PC-9 (cell line): ENCODE measurements at regions of chr20 and their contacts with region 1.

Region 1: GRCh38 chr20:18252597-18253451 is 35.5 kb upstream of the ZNF133 start:
- DNase-seq: peak; percentile 95 to 100
- H3K4me3 ChIP-seq: peak overlapping the region; percentile 34; the same call in 1 of the 2 replicates
- H3K27ac ChIP-seq: peak overlapping the region; percentile 96
- H3K4me1 ChIP-seq: peaks cover 40% of the 10 kb centered on the region
- H3K27me3 ChIP-seq: no peaks in the 10 kb centered on the region
- CTCF ChIP-seq: no peak

Region 2: GRCh38 chr20:18144541-18145099 is 108.2 kb before region 1 on chr20:
- CTCF ChIA-PET with region 1: interaction called, 3 read pairs
- POLR2A ChIA-PET with region 1: interaction called, 3 read pairs
- intact Hi-C with region 1: loop called (anchors 1 kb)
- DNase-seq: peak; percentile 64 to 94
- H3K4me3 ChIP-seq: peak overlapping the region; percentile 55; the same call in 1 of the 2 replicates
- H3K27ac ChIP-seq: peak overlapping the region; percentile 93
- H3K4me1 ChIP-seq: peaks cover 62% of the 10 kb centered on the region
- H3K27me3 ChIP-seq: no peaks in the 10 kb centered on the region
- CTCF ChIP-seq: no peak

Region 3: DNA sequence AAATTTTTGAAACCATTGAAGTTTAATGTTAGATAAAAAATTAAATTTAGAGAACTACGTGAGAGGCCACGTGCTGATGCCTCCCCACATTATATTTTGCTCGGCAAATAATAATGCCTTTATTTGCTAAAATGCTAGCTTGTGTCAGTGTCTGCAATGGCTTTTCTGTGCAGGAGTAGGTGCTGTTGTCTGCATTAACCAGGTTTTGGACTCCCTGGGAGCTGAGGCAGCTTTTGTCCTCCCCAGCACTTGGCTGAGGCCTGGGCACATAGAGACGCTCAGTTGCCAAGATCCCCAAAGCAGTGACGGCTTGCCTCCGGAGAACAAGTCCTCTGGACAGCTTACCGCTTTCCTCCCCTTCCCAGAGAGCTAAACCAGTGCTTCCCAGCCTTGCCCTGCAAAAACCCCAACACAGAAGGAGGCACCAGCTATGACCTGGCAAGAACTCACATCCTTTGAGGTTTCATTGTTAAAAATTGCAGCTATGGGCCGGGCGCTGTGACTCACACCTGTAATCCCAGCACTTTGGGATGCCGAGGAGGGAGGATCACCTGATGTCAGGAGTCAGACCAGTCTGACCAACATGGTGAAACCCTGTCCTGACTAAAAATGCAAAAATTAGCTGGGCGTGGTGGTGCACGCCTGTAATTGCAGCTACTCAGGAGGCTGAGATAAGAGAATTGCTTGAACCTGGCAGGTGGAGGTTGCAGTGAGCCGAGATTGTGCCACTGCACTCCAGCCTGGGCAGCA is 55.3 kb before region 1 on chr20:
- CTCF ChIA-PET with region 1: interaction called, 3 read pairs
- POLR2A ChIA-PET with region 1: interaction called, 7 read pairs
- intact Hi-C with region 1: loop called (anchors 1 kb)
- DNase-seq: peak; percentile 91 to 96
- H3K4me3 ChIP-seq: peak overlapping the region; percentile 26; the same call in 1 of the 2 replicates
- H3K27ac ChIP-seq: peak overlapping the region; percentile 86
- H3K4me1 ChIP-seq: peaks cover 22% of the 10 kb centered on the region
- H3K27me3 ChIP-seq: no peaks in the 10 kb centered on the region
- CTCF ChIP-seq: peak; percentile 43

Region 4: GRCh38 chr20:18224968-18225568 is 27.8 kb before region 1 on chr20:
- CTCF ChIA-PET with region 1: interaction called, 17 read pairs
- POLR2A ChIA-PET with region 1: no interaction called
- intact Hi-C with region 1: loop called (anchors 1 kb)
- DNase-seq: peak; percentile 68 to 77
- H3K4me3 ChIP-seq: peak overlapping the region; percentile 33; the same call in 1 of the 2 replicates
- H3K27ac ChIP-seq: peak overlapping the region; percentile 49
- H3K4me1 ChIP-seq: peaks cover 37% of the 10 kb centered on the region
- H3K27me3 ChIP-seq: no peaks in the 10 kb centered on the region
- CTCF ChIP-seq: no peak

Region 5: GRCh38 chr20:18263723-18264122 is 10.9 kb after region 1 on chr20:
- CTCF ChIA-PET with region 1: no interaction called
- POLR2A ChIA-PET with region 1: no interaction called
- intact Hi-C with region 1: loop called (anchors 1 kb)
- DNase-seq: peak; percentile 80 to 94
- H3K4me3 ChIP-seq: no peak overlapping the region
- H3K27ac ChIP-seq: peak overlapping the region; percentile 58
- H3K4me1 ChIP-seq: peaks cover 42% of the 10 kb centered on the region
- H3K27me3 ChIP-seq: no peaks in the 10 kb centered on the region
- CTCF ChIP-seq: no peak